ENCODE measurements at regions of chr10 and their contacts with region 1.

Region 1: DNA sequence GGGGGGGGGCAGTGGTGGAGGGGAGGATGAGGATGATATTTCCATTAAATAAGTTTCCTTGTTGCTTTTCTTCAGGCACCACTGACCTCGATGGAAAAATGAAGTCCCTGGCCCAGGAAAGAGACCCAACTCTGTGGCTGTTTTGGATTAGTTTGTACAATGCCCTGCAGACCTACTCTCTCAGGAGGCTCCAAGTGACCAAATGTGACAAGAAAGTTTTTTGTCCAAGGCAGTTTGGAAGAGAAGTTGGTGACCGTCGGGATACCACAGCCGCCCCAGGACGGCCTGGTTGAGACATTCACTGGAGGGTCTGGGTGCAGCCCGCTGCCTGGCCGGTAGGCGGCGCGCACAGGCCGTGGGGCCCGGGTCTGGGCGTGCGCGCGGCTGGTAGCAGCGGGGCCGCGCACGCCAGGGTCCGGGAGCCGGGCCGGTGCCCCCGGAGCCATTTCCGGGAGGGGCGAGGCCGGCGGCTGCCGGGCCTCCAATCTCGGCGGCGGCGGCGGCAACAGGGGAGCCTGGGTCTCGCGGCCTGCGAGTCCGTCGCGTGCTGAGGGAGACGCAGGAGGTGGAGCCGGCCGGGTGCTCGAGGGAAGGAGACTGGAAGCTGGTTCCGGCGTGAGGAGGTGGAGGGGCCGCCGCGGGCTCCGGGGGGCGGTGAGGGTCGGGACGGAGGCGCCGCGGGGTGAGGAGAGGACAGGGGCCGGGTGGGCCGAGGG is at the start of gene SGPL1:
- DNase-seq: peak; percentile 92
- ATAC-seq: peak; percentile 99
- H3K4me3 ChIP-seq: peak within 1 kb of the TSS; percentile 70
- H3K27ac ChIP-seq: peak within 1 kb of the TSS; percentile 86
- H3K4me1 ChIP-seq: peaks cover 7% of the 10 kb centered on the region
- H3K27me3 ChIP-seq: no peaks in the 10 kb centered on the region
- CTCF ChIP-seq: peak; percentile 94
- total RNA-seq, gene SGPL1: 38.3 TPM

Region 2: DNA sequence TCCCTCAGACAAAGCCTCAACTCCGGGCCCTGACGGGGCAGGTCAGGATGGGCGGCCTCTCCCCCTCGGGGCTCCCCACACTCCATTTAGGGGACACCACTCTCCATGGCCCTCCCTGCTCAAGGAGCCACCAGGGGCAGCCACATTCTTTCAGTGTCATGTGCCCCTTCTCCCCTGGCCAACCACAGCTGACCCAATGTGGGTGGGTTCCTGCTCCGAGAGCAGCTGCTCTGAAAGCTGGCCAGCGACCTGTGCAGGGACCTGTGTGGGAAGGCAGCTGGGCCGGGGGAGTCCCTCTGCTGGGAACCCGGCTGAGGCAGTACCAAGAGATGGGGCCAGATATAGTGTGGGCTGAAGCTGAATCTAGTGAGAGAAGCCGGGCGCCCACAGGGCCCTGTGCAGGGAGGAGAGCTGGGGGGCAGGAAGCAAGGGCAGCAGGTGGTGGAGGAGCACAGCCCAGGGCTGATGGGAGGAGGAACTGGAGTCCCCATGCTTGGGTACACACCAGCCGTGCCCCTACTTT is 491.3 kb before region 1 on chr10:
- intact Hi-C with region 1: no loop called
- DNase-seq: no peak
- ATAC-seq: peak; percentile 12
- H3K4me3 ChIP-seq: no peak overlapping the region
- H3K27ac ChIP-seq: peak overlapping the region; percentile 30
- H3K4me1 ChIP-seq: no peaks in the 10 kb centered on the region
- H3K27me3 ChIP-seq: no peaks in the 10 kb centered on the region
- CTCF ChIP-seq: no peak

Region 3: DNA sequence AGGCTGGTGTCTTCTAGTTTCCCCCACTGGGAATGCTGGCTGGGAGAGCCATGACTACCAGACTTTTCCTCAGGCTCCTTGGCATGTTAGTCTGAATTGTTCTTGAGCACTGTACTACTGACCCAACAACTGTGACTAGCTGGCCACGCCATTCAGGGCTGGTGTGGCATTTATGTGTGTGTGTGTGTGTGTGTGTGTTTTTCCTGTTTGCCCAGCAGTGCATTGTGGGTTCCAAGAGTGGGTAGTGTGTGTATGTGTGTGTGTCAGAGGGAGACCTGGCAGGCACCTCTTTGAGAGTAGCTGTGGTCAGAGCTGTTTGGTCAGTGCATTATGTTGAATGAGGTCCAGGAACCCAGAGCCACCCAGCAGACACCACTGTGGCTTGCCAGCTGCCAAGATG is 63.5 kb after region 1 on chr10:
- intact Hi-C with region 1: loop called (anchors 10 kb)
- DNase-seq: no peak
- ATAC-seq: no peak
- H3K4me3 ChIP-seq: no peak overlapping the region
- H3K27ac ChIP-seq: no peak overlapping the region
- H3K4me1 ChIP-seq: no peaks in the 10 kb centered on the region
- H3K27me3 ChIP-seq: no peaks in the 10 kb centered on the region
- CTCF ChIP-seq: no peak

Region 4: GRCh38 chr10:70925377-70926225 is 109.9 kb after region 1 on chr10:
- intact Hi-C with region 1: no loop called
- DNase-seq: peak; percentile 80
- ATAC-seq: peak; percentile 78
- H3K4me3 ChIP-seq: no peak overlapping the region
- H3K27ac ChIP-seq: no peak overlapping the region
- H3K4me1 ChIP-seq: no peaks in the 10 kb centered on the region
- H3K27me3 ChIP-seq: no peaks in the 10 kb centered on the region
- CTCF ChIP-seq: peak; percentile 94

Region 5: GRCh38 chr10:71001470-71001869 is 185.8 kb after region 1 on chr10:
- intact Hi-C with region 1: no loop called
- DNase-seq: no peak
- ATAC-seq: no peak
- H3K4me3 ChIP-seq: no peak overlapping the region
- H3K27ac ChIP-seq: no peak overlapping the region
- H3K4me1 ChIP-seq: no peaks in the 10 kb centered on the region
- H3K27me3 ChIP-seq: peaks cover 2% of the 10 kb centered on the region
- CTCF ChIP-seq: no peak

Region 6: DNA sequence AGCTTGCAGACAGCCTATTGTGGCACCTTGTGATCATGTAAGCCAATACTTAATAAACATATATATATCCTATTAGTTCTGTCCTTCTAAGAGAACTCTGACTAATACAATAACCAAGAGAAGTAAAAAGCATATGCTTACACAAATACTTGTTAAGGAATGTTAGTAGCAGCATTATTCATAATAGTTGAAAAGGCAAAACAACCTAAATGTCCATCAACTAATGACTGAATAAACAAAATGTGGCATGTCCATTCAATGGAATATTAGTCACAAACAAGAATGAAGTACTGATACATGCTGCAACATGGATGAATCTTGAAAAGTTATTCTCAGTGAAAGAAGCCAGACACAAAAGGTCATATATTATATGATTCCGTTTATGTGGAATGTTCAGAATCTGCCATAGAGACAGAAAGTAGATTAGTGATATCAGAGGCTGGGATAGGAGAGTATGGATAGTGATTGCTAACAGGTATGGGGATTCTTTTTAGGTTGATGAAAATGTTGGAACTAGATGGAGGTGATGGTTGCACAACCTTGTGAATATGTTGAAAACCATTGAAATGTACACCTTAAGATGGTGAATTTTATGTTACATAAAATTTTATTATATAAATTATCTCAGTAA is 284.2 kb after region 1 on chr10:
- intact Hi-C with region 1: no loop called
- DNase-seq: no peak
- ATAC-seq: no peak
- H3K4me3 ChIP-seq: no peak overlapping the region
- H3K27ac ChIP-seq: no peak overlapping the region
- H3K4me1 ChIP-seq: no peaks in the 10 kb centered on the region
- H3K27me3 ChIP-seq: no peaks in the 10 kb centered on the region
- CTCF ChIP-seq: no peak